PC-3 (cell line): ENCODE measurements at regions of chr6 and their contacts with region 1.

Region 1: GRCh38 chr6:44338228-44339122 is 4.0 kb upstream of the SPATS1 start:
- DNase-seq: peak; percentile 80
- ATAC-seq: peak; percentile 73
- H3K4me3 ChIP-seq: no peak overlapping the region
- H3K27ac ChIP-seq: no peak overlapping the region
- H3K4me1 ChIP-seq: peaks cover 5% of the 10 kb centered on the region; the same call in 1 of the 2 replicates
- H3K27me3 ChIP-seq: peaks cover 10% of the 10 kb centered on the region; the same call in 1 of the 2 replicates
- CTCF ChIP-seq: peak; percentile 88

Region 2: DNA sequence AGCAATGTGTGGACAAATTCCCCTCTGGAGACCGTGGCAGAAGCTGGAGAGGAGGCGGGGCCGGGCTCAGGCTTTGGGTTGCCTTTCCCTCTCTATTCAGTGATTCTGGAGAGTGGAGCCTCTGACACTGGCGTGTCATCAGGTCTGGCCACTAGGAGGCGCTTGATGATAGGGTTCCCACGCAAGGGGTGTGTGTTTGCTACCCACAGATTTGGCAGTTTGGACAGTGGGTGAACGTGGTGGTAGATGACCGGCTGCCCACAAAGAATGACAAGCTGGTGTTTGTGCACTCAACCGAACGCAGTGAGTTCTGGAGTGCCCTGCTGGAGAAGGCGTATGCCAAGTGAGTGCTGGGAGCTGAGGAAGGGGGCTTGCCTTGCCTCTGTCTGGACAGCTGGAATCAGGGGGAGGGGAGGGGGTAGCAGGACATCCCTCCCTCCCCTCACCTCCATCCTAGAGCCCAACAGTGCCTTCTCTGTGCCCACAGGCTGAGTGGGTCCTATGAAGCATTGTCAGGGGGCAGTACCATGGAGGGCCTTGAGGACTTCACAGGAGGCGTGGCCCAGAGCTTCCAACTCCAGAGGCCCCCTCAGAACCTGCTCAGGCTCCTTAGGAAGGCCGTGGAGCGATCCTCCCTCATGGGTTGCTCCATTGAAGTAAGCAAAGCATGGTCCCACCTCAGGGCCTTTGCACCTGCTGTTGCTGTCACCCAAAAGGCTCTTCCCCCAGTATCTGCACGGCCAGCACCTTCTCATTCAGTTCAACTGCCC is 165.6 kb before region 1 on chr6:
- CTCF ChIA-PET with region 1: no interaction called
- POLR2A ChIA-PET with region 1: no interaction called
- intact Hi-C with region 1: loop called (anchors 2 kb)
- DNase-seq: peak; percentile 89
- ATAC-seq: peak; percentile 99
- H3K4me3 ChIP-seq: no peak overlapping the region
- H3K27ac ChIP-seq: no peak overlapping the region
- H3K4me1 ChIP-seq: no peaks in the 10 kb centered on the region
- H3K27me3 ChIP-seq: no peaks in the 10 kb centered on the region
- CTCF ChIP-seq: peak; percentile 97

Region 3: DNA sequence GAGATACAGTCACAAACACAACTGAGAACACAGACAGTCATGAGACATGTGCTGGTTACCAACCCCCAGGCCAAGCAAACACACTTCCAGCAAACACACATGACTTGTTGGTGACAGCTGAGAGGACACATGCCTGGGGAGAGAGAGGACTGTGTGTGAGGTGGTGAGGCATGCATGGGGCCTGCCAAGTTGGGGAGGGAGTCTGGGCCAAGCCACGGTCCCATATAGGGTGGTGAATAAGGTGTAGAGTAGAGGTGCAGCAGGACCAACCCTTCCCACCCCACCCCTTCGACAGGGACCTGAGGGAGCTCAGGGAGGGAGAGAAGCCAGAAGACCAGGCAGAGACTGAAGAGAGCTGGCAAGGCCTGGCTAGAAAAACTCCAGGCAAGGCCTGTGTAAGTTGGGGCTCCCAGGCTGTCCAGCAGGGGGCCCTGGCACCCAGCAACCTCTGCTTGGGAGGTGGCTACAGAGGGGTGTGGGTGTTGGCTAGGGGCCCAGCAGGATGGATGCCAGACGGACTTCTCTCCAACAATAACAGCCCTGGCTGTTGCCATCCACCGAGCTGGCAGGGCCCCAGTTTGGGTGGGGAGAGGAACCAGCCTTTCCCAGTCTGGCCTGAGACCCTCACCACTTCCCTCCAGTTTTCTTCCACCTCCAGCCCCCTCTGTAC is 117.0 kb before region 1 on chr6:
- CTCF ChIA-PET with region 1: no interaction called
- POLR2A ChIA-PET with region 1: no interaction called
- intact Hi-C with region 1: no loop called
- DNase-seq: peak; percentile 81
- ATAC-seq: peak; percentile 45
- H3K4me3 ChIP-seq: no peak overlapping the region
- H3K27ac ChIP-seq: no peak overlapping the region
- H3K4me1 ChIP-seq: peaks cover 29% of the 10 kb centered on the region
- H3K27me3 ChIP-seq: no peaks in the 10 kb centered on the region
- CTCF ChIP-seq: peak; percentile 78

Region 4: DNA sequence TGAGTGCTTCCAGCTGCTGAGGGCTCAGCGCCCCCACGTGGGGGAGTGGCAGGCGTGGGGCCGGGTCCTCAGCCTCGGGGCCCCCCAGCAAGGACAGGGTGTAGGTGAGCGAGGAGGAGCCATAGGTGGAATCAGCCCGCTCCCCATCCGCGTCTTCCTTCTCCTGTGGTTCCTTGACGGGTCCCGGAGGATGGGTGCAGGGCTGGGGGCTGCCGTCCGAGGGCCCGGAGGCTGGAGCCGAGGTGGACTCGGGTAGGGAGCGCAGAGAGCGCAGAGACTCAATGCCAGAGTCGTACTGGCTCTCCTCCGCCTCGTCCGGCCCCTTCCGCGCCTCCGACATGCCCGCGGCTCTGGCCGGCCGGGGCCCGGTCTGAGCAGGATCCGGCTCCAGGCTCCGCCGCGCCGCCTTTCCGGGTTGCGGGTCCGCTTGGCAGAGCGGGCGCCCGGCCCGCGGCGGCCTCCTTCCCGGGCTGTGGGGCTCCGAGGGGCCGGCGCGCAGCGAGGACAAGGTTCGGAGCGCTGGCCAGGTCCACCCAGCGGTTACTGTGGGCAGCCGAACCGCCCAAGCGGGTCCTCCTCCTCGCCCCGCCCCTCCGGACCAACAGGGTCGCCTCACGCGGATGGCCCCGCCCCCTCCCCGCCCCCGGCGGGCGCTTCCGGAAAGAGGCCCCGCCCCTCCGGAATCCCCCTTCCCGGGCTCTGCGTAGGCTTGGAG is 73.3 kb before region 1 on chr6 and contains the start of gene NFKBIE:
- CTCF ChIA-PET with region 1: interaction called, 7 read pairs
- POLR2A ChIA-PET with region 1: no interaction called
- intact Hi-C with region 1: loop called (anchors 1 kb)
- DNase-seq: peak; percentile 92
- ATAC-seq: peak; percentile 79
- H3K4me3 ChIP-seq: peak within 1 kb of the TSS; percentile 80
- H3K27ac ChIP-seq: no peak within 1 kb of the TSS
- H3K4me1 ChIP-seq: peaks cover 23% of the 10 kb centered on the region
- H3K27me3 ChIP-seq: peaks cover 14% of the 10 kb centered on the region
- CTCF ChIP-seq: peak; percentile 45
- total RNA-seq, gene NFKBIE: 7.4 and 28.7 TPM in 2 replicates